AG04450 (cell line): ENCODE measurements at regions of chr2 and their contacts with region 1.

Region 1: GRCh38 chr2:10659898-10660568 is 29.7 kb downstream of the NOL10 start:
- DNase-seq: peak; percentile 63
- H3K4me3 ChIP-seq: no peak overlapping the region
- H3K27ac ChIP-seq: no peak overlapping the region
- H3K27me3 ChIP-seq: no peaks in the 10 kb centered on the region
- CTCF ChIP-seq: peak; percentile 85

Region 2: DNA sequence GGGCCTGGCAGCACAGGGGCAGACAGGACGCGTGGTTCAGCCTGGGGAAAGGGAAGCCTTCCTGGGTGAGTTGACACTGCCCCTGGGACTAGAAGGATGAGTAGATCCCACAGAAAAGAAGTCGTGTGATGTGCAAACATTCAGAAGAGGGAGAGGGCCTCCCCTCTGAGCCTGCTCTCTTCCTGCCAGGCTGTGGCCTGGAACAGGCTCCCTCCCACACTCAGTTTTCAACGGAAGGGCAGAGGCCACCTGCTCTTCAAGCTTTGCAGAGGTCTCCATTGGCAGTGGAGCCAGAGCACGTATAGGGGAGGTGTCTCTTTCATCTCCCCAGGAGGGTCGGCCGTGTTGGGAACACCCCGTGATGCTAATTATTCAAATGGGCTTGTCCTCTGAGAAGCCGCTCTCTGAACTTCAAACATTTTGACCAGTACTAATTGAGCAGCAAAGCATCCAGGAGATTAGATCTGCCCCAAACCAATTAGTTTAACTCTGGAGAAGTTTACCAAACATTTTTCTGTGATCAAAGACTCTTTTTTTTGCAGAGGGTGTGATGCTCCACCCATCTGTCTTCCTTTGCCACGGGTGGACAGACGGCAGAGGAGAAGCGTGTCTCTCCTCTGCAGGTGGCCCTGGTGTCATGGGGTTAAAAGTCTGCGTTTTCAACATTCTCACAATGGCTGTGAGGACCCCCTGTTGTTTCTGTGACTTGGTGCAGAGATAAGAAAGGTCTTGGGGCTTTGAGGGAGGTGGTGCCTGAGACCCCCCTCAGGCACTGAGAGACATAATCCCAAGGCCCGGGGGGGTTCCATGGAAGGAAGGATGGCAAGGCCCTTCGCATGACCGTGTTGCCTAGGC is 182.4 kb before region 1 on chr2:
- CTCF ChIA-PET with region 1: interaction called, 10 read pairs
- POLR2A ChIA-PET with region 1: no interaction called
- DNase-seq: no peak
- H3K4me3 ChIP-seq: no peak overlapping the region
- H3K27ac ChIP-seq: no peak overlapping the region
- H3K27me3 ChIP-seq: peaks cover 21% of the 10 kb centered on the region
- CTCF ChIP-seq: no peak